CD4-positive, alpha-beta T cell (primary cell): ENCODE measurements at regions of chr15 and their contacts with region 1.

Region 1: GRCh38 chr15:98734466-98735199 is 86.3 kb downstream of the IGF1R start:
- DNase-seq: no peak
- ATAC-seq: no peak
- H3K4me3 ChIP-seq: no peak overlapping the region
- H3K4me3 Mint-ChIP-seq: no peak overlapping the region
- H3K27ac ChIP-seq: no peak overlapping the region
- H3K27ac Mint-ChIP-seq: peak overlapping the region; percentile 1
- H3K4me1 ChIP-seq: peaks cover 8% of the 10 kb centered on the region
- H3K4me1 Mint-ChIP-seq: peaks cover 67% of the 10 kb centered on the region
- H3K27me3 ChIP-seq: no peaks in the 10 kb centered on the region
- H3K27me3 Mint-ChIP-seq: no peaks in the 10 kb centered on the region
- CTCF ChIP-seq: no peak

Region 2: DNA sequence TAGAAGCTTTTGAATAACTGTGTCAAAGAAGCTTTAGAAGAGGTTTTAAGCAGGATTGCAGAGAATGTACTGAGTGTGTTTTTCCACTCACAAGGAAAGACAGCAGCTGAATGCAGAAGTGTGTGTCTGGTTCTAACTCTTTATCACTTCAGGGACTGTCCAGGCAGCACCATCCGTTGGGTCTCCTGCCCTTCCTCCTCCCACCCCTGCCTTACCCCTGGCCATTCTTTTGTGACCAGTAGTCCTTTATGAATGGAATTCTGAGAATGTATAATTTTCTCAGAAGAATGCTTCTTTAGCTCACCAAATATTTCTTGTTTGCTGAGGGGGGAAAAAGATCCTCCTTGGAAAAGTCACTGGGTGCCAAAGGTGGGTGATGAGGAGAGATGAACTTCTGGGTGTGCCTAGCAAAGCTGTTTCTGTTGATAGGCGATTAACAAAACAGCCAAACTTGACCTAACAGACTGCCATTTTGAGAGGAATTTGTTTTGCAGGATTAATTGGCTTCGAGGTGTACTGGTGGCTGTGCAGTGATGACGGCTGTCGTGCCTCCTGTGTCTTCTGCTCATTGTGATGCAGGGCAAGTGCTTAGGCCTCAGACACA is 15.4 kb before region 1 on chr15:
- CTCF ChIA-PET with region 1: no interaction called
- POLR2A ChIA-PET with region 1: no interaction called
- intact Hi-C with region 1: no loop called
- DNase-seq: no peak
- ATAC-seq: no peak
- H3K4me3 ChIP-seq: no peak overlapping the region
- H3K4me3 Mint-ChIP-seq: no peak overlapping the region
- H3K27ac ChIP-seq: no peak overlapping the region
- H3K27ac Mint-ChIP-seq: no peak overlapping the region
- H3K4me1 ChIP-seq: peaks cover 38% of the 10 kb centered on the region
- H3K4me1 Mint-ChIP-seq: peaks cover 96% of the 10 kb centered on the region
- H3K27me3 ChIP-seq: no peaks in the 10 kb centered on the region
- H3K27me3 Mint-ChIP-seq: no peaks in the 10 kb centered on the region
- CTCF ChIP-seq: no peak

Region 3: GRCh38 chr15:98771541-98771940 is 36.9 kb after region 1 on chr15:
- CTCF ChIA-PET with region 1: no interaction called
- POLR2A ChIA-PET with region 1: no interaction called
- intact Hi-C with region 1: loop called in 1 of 2 experiments (anchors 5 kb)
- DNase-seq: no peak
- ATAC-seq: no peak
- H3K4me3 ChIP-seq: no peak overlapping the region
- H3K4me3 Mint-ChIP-seq: no peak overlapping the region
- H3K27ac ChIP-seq: no peak overlapping the region
- H3K27ac Mint-ChIP-seq: no peak overlapping the region
- H3K4me1 ChIP-seq: peaks cover 9% of the 10 kb centered on the region
- H3K4me1 Mint-ChIP-seq: peaks cover 63% of the 10 kb centered on the region
- H3K27me3 ChIP-seq: no peaks in the 10 kb centered on the region
- H3K27me3 Mint-ChIP-seq: no peaks in the 10 kb centered on the region
- CTCF ChIP-seq: no peak